ENCODE measurements at regions of chr18 and their contacts with region 1.

Region 1: GRCh38 chr18:13159579-13159978 is 59.0 kb upstream of the LDLRAD4 start:
- DNase-seq: peak in 2 of 5 donors; percentile 36 to 65
- H3K4me3 ChIP-seq: no peak overlapping the region
- H3K4me3 Mint-ChIP-seq: peak overlapping the region in 1 of 7 donors; percentile 6
- H3K27ac ChIP-seq: no peak overlapping the region
- H3K27ac Mint-ChIP-seq: no peak overlapping the region
- H3K4me1 ChIP-seq: peaks cover 3% of the 10 kb centered on the region
- H3K4me1 Mint-ChIP-seq: peaks cover 2 to 5% (median 4%) of the 10 kb centered on the region in 3 donors
- H3K27me3 ChIP-seq: no peaks in the 10 kb centered on the region
- H3K27me3 Mint-ChIP-seq: peaks cover 7 to 30% of the 10 kb centered on the region in 2 donors

Region 2: GRCh38 chr18:13137670-13138419 is 21.7 kb before region 1 on chr18:
- CTCF ChIA-PET with region 1: interaction called, 11 read pairs
- POLR2A ChIA-PET with region 1: no interaction called
- DNase-seq: peak; percentile 26 to 84 (median 71)
- H3K4me3 ChIP-seq: peak overlapping the region; percentile 80
- H3K4me3 Mint-ChIP-seq: peak overlapping the region; percentile 92 to 99 (median 98)
- H3K27ac ChIP-seq: peak overlapping the region; percentile 45
- H3K27ac Mint-ChIP-seq: peak overlapping the region; percentile 94 to 99 (median 95)
- H3K4me1 ChIP-seq: peaks cover 10% of the 10 kb centered on the region
- H3K4me1 Mint-ChIP-seq: peaks cover 26 to 33% (median 31%) of the 10 kb centered on the region in 3 donors
- H3K27me3 ChIP-seq: no peaks in the 10 kb centered on the region
- H3K27me3 Mint-ChIP-seq: peaks cover 0 to 12% of the 10 kb centered on the region in 2 donors

Measured in CD8-positive, alpha-beta memory T cell (primary cell).